ENCODE measurements at regions of chr10 and their contacts with region 1.

Region 1: GRCh38 chr10:131943021-131943814 is 38.5 kb downstream of the BNIP3 start:
- DNase-seq: peak; percentile 52 to 59
- ATAC-seq: peak; percentile 63 to 90; a peak in 5 of 6 replicates
- H3K4me3 ChIP-seq: no peak overlapping the region
- H3K27ac ChIP-seq: no peak overlapping the region
- H3K4me1 ChIP-seq: peaks cover 31% of the 10 kb centered on the region
- CTCF ChIP-seq: peak; percentile 39; the same call in 2 of the 3 replicates
- EP300 ChIP-seq: no peak
- POLR2A ChIP-seq: no peak
- RAD21 ChIP-seq: peak; percentile 20 to 22; a peak in 1 of 5 replicates

Region 2: DNA sequence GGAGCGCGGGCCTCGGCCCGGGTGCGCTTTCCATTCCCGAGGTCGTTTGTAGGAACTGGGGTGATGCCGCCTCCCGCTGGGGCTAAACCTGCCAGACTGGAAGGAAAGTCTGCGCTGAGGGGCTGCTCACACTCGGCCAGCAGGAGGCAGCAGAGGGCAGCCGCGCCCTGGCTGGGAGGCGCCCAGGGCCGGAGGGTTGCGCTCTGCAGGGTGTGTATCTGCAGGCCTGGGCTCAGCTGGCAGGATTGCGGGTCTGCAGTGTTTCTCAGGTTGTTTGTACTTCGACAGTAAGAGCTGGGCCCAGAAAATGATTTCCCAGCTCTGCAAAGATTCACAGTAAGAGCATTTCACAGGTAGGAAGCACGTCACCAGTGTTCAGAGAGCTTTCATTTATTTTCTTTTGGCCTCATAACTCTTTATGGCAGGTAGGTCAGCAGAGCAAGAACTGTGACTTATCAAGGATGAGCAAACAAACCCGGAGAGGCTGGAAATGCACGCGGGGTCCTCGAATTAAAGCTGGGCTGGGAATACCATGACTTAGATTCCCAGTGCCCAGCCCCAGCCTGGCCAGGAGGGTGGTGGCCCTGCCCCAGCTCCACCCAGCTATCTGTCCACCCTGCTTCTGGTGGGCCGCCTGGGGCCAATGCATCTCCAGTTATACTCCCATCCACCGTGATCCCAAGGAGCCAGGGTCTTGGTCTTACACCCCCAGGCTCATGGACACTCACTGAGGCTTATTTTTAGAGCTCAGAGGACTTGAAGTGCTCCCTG is 57.6 kb before region 1 on chr10:
- CTCF ChIA-PET with region 1: interaction called, 18 read pairs
- POLR2A ChIA-PET with region 1: no interaction called
- DNase-seq: peak; percentile 76 to 84
- ATAC-seq: peak; percentile 91 to 99
- H3K4me3 ChIP-seq: no peak overlapping the region
- H3K27ac ChIP-seq: no peak overlapping the region
- H3K4me1 ChIP-seq: peaks cover 5% of the 10 kb centered on the region; the same call in 1 of the 3 replicates
- CTCF ChIP-seq: peak; percentile 94
- EP300 ChIP-seq: no peak
- POLR2A ChIP-seq: no peak
- RAD21 ChIP-seq: peak; percentile 88 to 89

Region 3: GRCh38 chr10:131961777-131962662 is 18.8 kb after region 1 on chr10:
- CTCF ChIA-PET with region 1: interaction called, 10 read pairs
- POLR2A ChIA-PET with region 1: no interaction called
- DNase-seq: no peak
- ATAC-seq: no peak
- H3K4me3 ChIP-seq: no peak overlapping the region
- H3K27ac ChIP-seq: no peak overlapping the region
- H3K4me1 ChIP-seq: no peaks in the 10 kb centered on the region
- CTCF ChIP-seq: no peak
- EP300 ChIP-seq: no peak
- POLR2A ChIP-seq: no peak
- RAD21 ChIP-seq: no peak

Region 4: GRCh38 chr10:132011024-132011423 is 67.8 kb after region 1 on chr10:
- CTCF ChIA-PET with region 1: no interaction called
- POLR2A ChIA-PET with region 1: no interaction called
- DNase-seq: no peak
- ATAC-seq: no peak
- H3K4me3 ChIP-seq: no peak overlapping the region
- H3K27ac ChIP-seq: no peak overlapping the region
- H3K4me1 ChIP-seq: no peaks in the 10 kb centered on the region
- CTCF ChIP-seq: no peak
- EP300 ChIP-seq: no peak
- POLR2A ChIP-seq: no peak
- RAD21 ChIP-seq: no peak

Region 5: DNA sequence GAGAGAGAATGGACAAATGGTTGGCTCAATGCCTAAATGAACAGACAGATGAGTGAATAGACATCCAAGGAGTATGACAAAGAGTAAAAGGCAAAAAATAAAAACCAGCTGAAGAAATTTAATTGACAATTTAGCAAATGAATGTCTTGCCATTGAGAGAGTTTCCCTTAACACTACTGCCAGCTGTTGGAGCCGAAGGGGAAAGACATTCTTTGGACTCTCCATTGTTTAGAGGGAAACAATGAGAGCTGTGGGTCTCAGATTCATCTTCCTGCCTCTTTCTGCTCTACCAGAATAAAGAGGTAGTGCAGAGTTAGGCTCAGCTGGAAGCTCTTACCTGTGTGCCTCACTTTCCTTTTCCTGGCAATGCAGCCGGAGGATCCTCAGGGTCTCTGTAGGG is 1614.3 kb after region 1 on chr10:
- CTCF ChIA-PET with region 1: no interaction called
- POLR2A ChIA-PET with region 1: no interaction called
- DNase-seq: no peak
- ATAC-seq: no peak
- H3K4me3 ChIP-seq: no peak overlapping the region
- H3K27ac ChIP-seq: no peak overlapping the region
- H3K4me1 ChIP-seq: no peaks in the 10 kb centered on the region
- CTCF ChIP-seq: no peak
- EP300 ChIP-seq: no peak
- POLR2A ChIP-seq: no peak
- RAD21 ChIP-seq: no peak